ENCODE measurements at regions of chr5 and their contacts with region 1.

Region 1: GRCh38 chr5:153400931-153401330 is 89.5 kb upstream of the GRIA1 start:
- DNase-seq: no peak
- H3K4me3 ChIP-seq: no peak overlapping the region
- H3K27ac ChIP-seq: no peak overlapping the region
- H3K4me1 ChIP-seq: peaks cover 8% of the 10 kb centered on the region
- H3K27me3 ChIP-seq: no peaks in the 10 kb centered on the region
- CTCF ChIP-seq: no peak

Region 2: DNA sequence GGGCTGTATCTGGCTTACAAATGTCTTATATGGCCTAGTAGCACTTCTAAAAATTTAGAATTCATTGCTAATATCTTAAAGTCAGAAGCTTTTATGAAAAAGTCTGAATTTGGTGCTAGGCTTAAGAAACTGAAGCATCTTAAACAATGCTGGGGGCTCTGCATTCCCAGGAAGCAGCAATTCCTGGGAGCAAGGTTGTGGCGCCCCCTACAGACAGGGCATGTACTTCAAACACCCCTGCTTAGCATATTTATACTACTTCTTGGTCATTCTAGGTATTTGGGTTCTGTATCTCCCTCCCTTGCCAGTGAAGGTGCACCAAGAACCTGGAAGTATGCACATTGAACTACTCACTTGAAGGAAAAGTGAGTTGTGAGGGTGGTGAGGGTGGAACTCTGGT is 25.0 kb after region 1 on chr5:
- CTCF ChIA-PET with region 1: no interaction called
- POLR2A ChIA-PET with region 1: interaction called, 28 read pairs
- intact Hi-C with region 1: no loop called
- DNase-seq: no peak
- H3K4me3 ChIP-seq: no peak overlapping the region
- H3K27ac ChIP-seq: no peak overlapping the region
- H3K4me1 ChIP-seq: no peaks in the 10 kb centered on the region
- H3K27me3 ChIP-seq: peaks cover 35% of the 10 kb centered on the region
- CTCF ChIP-seq: peak; percentile 42; the same call in 1 of the 2 replicates